Right ventricle myocardium inferior (tissue), 1 donor: ENCODE measurements at regions of chr1 and their contacts with region 1.

Region 1: GRCh38 chr1:99544328-99544727 is 101.6 kb upstream of the PALMD start:
- DNase-seq: no peak
- ATAC-seq: no peak

Region 2: DNA sequence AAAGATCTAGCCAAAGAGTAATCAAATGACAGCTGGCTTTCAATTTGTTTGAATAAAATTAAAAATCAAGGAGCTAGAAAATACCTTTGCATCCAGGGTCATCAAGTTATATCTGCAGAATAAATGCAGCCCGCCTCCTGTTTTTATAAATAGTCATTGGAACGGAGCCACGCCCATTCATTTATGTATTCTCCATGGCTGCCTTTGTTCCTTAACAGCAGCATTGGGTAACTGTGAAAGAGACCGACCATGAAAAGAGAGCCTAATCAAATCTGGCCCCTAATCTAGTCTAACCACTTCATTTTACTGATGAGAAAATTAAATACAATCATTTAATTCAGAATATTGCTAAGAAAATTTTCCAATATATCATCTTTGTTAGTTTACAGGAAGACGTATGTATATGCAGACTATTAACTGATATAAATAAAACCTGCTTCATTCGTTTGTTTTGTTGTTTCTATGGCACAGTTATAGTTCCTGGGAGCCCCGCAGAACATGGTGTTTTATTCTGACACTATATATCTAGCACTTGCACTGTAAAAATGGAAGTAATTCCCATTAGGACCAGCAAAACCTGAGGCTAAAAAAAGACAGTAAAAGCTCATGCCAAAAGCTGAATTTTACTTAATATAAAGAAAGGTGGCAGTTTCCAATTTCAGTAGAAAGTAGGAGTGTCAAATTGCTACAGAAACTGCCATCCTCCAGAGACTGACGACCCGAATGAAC is 10.3 kb before region 1 on chr1:
- intact Hi-C with region 1: no loop called
- DNase-seq: no peak
- ATAC-seq: peak; percentile 62

Region 3: GRCh38 chr1:99599678-99600175 is 55.4 kb after region 1 on chr1:
- intact Hi-C with region 1: loop called (anchors 5 kb)
- DNase-seq: peak; percentile 68
- ATAC-seq: peak; percentile 28

Region 4: GRCh38 chr1:99685516-99686180 is 141.3 kb after region 1 on chr1:
- intact Hi-C with region 1: loop called (anchors 5 kb)
- DNase-seq: peak; percentile 70
- ATAC-seq: peak; percentile 89